ENCODE measurements at regions of chr20 and their contacts with region 1.

Region 1: GRCh38 chr20:43448748-43449535 is 8.8 kb upstream of the SRSF6 start:
- DNase-seq: peak; percentile 56
- H3K4me3 Mint-ChIP-seq: no peak overlapping the region
- H3K27ac Mint-ChIP-seq: no peak overlapping the region
- H3K4me1 Mint-ChIP-seq: no peaks in the 10 kb centered on the region
- H3K27me3 Mint-ChIP-seq: peaks cover 9% of the 10 kb centered on the region
- CTCF ChIP-seq: peak; percentile 82

Region 2: DNA sequence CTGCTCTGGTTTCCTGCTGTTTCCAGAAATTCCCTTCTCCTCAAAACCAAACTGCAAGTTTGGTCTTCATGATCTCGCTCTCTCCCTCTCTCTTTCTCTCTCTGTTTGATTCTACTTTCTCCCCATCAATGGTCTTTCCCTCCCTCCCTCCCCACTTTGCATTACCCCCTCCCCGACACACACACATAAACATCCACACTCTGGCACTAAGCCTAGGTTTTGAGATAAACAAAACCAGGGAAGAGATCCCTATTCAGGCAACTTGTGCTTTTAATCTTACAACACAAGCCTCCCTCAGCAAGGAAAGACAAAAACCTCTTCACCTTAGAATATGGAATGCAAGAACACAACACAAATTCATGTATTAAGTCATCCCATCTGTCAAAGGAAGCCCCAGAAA is 185.7 kb before region 1 on chr20:
- CTCF ChIA-PET with region 1: no interaction called
- POLR2A ChIA-PET with region 1: no interaction called
- intact Hi-C with region 1: no loop called
- DNase-seq: no peak
- H3K4me3 Mint-ChIP-seq: no peak overlapping the region
- H3K27ac Mint-ChIP-seq: no peak overlapping the region
- H3K4me1 Mint-ChIP-seq: no peaks in the 10 kb centered on the region
- H3K27me3 Mint-ChIP-seq: no peaks in the 10 kb centered on the region
- CTCF ChIP-seq: no peak

Region 3: DNA sequence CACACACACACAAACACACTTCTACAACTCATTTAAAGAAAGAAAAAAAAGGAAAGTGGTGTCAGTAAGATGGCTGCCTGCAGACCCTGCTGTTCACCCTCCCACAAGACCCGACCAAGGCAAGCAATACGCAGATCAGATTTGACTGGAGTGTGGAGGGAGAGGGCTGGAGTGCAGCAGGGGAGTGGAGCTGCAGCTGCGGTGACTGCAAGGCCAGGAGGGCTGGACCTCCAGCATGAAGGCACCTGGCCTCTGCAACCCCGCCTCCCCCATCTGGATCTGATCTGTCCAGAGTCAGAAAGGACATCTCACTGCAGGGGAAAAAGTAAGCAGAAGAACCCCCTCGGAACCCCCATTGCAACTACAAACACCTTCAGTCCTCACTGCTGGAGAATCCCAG is 33.3 kb before region 1 on chr20:
- CTCF ChIA-PET with region 1: no interaction called
- POLR2A ChIA-PET with region 1: no interaction called
- intact Hi-C with region 1: no loop called
- DNase-seq: no peak
- H3K4me3 Mint-ChIP-seq: no peak overlapping the region
- H3K27ac Mint-ChIP-seq: no peak overlapping the region
- H3K4me1 Mint-ChIP-seq: no peaks in the 10 kb centered on the region
- H3K27me3 Mint-ChIP-seq: no peaks in the 10 kb centered on the region
- CTCF ChIP-seq: no peak

Region 4: DNA sequence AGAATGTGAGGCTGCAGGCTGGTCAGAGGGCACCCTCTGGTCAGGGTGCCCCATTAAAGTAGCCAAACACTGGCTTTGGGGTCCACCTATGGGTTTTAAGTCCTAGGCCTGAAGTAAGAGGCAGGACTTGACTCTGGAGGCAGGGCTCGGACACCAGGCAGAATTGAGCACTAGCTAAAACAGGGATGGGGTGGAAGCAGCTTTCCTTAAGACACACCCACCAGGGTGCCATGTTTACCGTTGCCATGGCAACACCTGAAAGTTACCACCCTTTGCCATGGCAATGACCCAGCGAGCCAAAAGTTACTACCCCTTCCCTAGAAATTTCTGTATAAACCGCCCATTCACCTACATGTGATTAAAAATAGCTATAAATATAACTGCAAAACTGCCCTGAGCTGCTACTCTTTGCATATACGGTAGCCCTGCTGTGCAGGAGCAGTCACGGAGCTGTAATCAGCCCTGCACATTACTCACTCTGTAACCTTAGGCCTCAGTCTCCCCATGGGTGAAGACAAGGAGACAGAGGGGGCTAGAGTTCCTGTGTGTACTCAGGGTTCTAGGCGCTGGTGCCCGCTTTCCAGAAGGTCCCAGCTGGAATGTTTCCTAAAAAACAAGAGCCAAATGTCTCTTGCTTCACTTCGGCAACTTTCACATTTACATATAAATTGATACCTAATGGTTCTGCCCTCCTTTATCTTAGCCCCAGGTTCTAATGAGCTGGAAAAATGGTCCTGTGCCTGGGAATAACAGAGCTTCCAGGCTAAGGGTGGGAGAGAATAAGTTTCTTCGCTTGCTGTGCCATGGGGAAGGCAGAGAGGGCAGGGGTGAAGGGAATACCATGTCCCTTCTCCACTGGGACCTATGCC is 18.4 kb before region 1 on chr20:
- CTCF ChIA-PET with region 1: interaction called, 13 read pairs
- POLR2A ChIA-PET with region 1: no interaction called
- intact Hi-C with region 1: no loop called
- DNase-seq: no peak
- H3K4me3 Mint-ChIP-seq: no peak overlapping the region
- H3K27ac Mint-ChIP-seq: no peak overlapping the region
- H3K4me1 Mint-ChIP-seq: peaks cover 9% of the 10 kb centered on the region
- H3K27me3 Mint-ChIP-seq: peaks cover 58% of the 10 kb centered on the region
- CTCF ChIP-seq: no peak

Region 5: DNA sequence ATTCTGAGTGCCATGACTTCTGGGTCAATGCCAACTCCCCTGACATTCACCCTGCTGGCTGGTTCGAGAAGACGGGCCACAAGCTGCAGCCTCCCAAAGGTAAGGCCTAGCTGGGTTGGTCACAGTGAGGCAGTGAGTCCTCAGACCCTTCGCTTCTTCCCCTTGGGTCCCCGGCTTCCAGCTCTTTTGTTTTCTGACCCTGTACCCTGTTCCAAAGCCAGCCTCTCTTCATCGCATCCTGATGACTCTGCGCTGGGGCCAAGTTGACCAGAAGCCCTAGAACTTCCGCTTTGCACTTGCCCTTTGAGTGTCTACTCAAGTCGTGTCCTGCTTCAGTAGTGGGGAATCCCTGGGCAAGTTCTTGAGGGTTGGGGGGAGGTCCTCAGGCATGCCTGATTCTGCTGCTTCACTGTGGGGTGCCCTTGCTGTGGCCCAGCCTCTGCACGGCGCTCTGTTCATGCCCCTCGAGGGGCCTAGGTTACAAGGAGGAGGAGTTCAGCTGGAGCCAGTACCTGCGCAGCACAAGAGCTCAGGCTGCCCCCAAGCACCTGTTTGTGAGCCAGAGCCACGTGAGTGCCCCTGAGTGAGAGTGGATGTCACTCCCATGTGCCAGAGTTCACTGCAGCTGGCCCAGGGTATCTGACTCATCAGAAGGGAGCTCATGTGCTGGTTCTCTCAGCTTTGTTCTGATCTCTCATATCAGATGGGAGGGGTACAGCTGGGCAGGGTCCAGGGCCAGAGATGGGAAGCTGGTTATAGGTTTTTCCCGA is 81.6 kb after region 1 on chr20:
- CTCF ChIA-PET with region 1: interaction called, 20 read pairs
- POLR2A ChIA-PET with region 1: no interaction called
- intact Hi-C with region 1: no loop called
- DNase-seq: no peak
- H3K4me3 Mint-ChIP-seq: no peak overlapping the region
- H3K27ac Mint-ChIP-seq: no peak overlapping the region
- H3K4me1 Mint-ChIP-seq: no peaks in the 10 kb centered on the region
- H3K27me3 Mint-ChIP-seq: no peaks in the 10 kb centered on the region
- CTCF ChIP-seq: no peak

Region 6: DNA sequence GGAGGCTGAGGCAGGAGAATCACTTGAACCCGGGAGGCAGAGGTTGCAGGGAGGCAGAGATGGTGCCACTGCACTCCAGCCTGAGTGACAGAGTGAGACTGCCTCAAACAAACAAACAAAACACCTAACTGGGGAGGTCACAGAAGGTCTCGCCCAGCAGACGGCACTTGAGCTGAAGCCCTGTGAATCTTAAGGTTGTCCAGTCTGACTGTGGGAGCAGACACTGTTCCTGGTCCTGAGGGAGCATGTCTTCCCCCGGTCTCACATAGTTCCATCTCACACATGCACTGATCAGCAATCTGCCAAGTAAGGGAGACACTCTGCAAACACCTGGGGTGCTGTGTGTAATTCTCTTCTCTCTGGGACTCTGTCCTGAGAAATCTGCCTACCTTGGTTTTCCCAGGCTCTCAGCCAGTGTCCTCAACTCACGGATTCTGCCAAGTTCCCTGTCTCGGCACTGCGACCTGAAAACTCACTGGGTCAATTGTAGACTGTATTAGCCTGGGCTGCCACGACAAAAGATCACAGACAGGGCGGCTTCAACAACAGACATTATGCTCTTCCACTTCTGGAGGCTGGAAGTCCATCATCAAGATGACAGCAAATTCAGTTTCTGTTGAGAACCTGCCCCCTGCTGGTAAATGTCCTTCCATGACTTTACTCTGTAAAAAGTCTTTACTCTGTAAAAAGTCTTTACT is 643.8 kb after region 1 on chr20:
- CTCF ChIA-PET with region 1: interaction called, 5 read pairs
- POLR2A ChIA-PET with region 1: interaction called, 4 read pairs
- intact Hi-C with region 1: loop called (anchors 1 kb)
- DNase-seq: peak; percentile 61
- H3K4me3 Mint-ChIP-seq: no peak overlapping the region
- H3K27ac Mint-ChIP-seq: no peak overlapping the region
- H3K4me1 Mint-ChIP-seq: peaks cover 16% of the 10 kb centered on the region
- H3K27me3 Mint-ChIP-seq: no peaks in the 10 kb centered on the region
- CTCF ChIP-seq: peak; percentile 52

Measured in MCF 10A (cell line).